Endothelial cell of umbilical vein (primary cell): ENCODE measurements at regions of chr12 and their contacts with region 1.

Region 1: GRCh38 chr12:76259660-76260389 is 88.4 kb downstream of the BBS10 start:
- DNase-seq: peak; percentile 93
- H3K4me3 ChIP-seq: peak overlapping the region; percentile 19 to 96 (median 95)
- H3K27ac ChIP-seq: peak overlapping the region; percentile 96
- H3K4me1 ChIP-seq: peaks cover 30% of the 10 kb centered on the region
- H3K27me3 ChIP-seq: no peaks in the 10 kb centered on the region
- CTCF ChIP-seq: no peak
- POLR2A ChIP-seq: peak; percentile 89

Region 2: DNA sequence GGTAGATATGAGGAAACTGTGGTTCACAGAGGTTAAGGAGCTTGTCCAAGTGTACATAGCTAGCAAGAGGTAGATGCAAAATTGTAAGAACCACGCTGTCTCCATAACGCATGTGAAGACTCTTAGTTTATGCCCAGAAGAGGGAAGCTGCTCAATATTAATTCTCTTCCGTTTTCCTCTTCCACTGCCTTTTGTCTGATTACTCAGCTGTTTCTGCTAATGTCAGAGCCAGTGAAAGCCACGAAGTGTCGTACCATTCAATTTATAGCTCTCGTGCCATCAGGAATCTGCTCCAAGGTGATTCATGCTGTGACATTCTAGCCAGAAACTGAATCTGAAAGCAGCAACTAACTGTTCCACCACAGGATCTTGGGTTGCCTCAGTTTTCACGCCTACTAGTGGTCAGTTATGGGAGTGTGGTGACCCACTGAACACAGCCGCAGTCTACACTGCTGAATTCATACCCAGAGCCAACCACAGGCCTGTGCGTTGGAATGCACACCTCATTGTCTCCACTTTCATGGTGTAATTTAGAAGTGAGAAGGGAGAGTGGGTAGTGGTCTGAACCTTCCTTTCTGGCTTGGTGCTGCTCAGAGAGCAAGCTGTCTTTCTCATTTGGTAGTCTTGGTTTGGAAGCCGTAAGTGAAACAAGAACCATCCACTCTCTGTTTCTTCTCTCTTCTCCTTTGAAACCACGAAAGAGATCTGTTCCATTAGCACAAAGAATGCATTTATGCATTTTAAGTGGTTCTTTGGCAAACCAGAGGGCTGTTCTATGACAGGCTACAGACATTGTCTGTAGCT is 101.1 kb before region 1 on chr12:
- CTCF ChIA-PET with region 1: interaction called, 16 read pairs
- POLR2A ChIA-PET with region 1: no interaction called
- dilution Hi-C with region 1: no loop called
- intact Hi-C with region 1: no loop called
- DNase-seq: peak; percentile 78
- H3K4me3 ChIP-seq: no peak overlapping the region
- H3K27ac ChIP-seq: no peak overlapping the region
- H3K4me1 ChIP-seq: peaks cover 4% of the 10 kb centered on the region
- H3K27me3 ChIP-seq: no peaks in the 10 kb centered on the region
- CTCF ChIP-seq: peak; percentile 74 to 77
- POLR2A ChIP-seq: no peak

Region 3: GRCh38 chr12:76226397-76226796 is 33.4 kb before region 1 on chr12:
- CTCF ChIA-PET with region 1: interaction called, 4 read pairs
- POLR2A ChIA-PET with region 1: interaction called, 3 read pairs
- dilution Hi-C with region 1: no loop called
- intact Hi-C with region 1: loop called (anchors 1 kb)
- DNase-seq: peak; percentile 90
- H3K4me3 ChIP-seq: no peak overlapping the region
- H3K27ac ChIP-seq: peak overlapping the region; percentile 80
- H3K4me1 ChIP-seq: peaks cover 30% of the 10 kb centered on the region
- H3K27me3 ChIP-seq: no peaks in the 10 kb centered on the region
- CTCF ChIP-seq: no peak
- POLR2A ChIP-seq: peak; percentile 39

Region 4: DNA sequence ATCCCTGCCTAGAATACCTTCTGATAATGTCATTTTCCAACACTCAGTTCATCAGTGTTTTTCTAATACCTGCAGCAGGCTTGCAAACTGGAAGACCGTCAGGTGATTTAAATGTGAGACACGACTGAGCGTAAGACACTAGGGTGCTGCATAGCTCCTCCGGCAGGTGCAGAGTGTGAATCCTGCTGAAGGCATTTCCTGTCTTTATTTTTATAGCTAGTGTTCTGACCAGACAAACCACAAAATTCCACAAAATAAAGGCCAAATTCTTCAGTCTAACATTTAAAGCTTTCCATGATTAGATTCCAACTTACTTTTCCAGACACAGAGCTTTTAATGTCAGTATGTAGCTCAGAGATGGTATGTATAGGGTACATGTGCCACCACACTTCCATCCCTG is 17.7 kb after region 1 on chr12:
- CTCF ChIA-PET with region 1: interaction called, 10 read pairs
- POLR2A ChIA-PET with region 1: interaction called, 7 read pairs
- dilution Hi-C with region 1: no loop called
- intact Hi-C with region 1: loop called (anchors 2 kb)
- DNase-seq: peak; percentile 54
- H3K4me3 ChIP-seq: no peak overlapping the region
- H3K27ac ChIP-seq: peak overlapping the region; percentile 87
- H3K4me1 ChIP-seq: peaks cover 45% of the 10 kb centered on the region
- H3K27me3 ChIP-seq: no peaks in the 10 kb centered on the region
- CTCF ChIP-seq: no peak
- POLR2A ChIP-seq: no peak